ENCODE measurements at regions of chr7 and their contacts with region 1.

Region 1: GRCh38 chr7:75914730-75915585 is at the start of gene POR:
- H3K4me3 Mint-ChIP-seq: peak within 1 kb of the TSS; percentile 93
- H3K27ac Mint-ChIP-seq: peak within 1 kb of the TSS; percentile 92
- H3K4me1 Mint-ChIP-seq: peaks cover 55% of the 10 kb centered on the region
- H3K27me3 Mint-ChIP-seq: no peaks in the 10 kb centered on the region

Region 2: DNA sequence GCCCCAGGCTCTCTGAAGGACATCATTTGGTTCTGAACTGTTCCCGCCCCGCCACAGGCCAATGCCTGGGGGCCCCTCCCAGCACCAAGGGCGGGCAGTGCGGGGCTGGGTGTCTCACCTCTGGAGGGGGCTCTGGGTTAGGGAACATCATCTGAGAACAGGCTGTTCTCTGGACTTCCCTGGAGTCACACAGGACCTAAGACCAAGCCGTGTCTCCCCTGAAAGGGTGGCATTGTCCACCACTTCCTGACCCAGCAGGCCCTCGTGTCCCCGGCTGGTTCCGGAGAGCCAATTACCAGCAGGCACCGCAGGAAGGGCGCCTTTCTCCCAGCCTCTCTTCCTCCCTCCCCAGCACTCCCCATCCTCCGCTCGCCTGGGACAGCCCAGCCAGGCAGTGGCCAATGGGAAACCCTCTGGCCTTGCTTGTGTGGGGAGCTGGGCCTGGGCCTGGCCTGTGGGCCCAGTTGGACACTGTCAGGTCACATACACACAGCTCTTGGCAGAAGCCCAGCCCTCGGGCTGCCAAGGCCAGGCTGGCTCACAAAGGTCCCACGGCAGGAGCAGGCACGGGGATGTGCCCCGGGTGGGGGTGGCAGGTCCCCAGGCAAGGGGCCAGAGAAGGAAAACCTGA is 303.3 kb before region 1 on chr7:
- intact Hi-C with region 1: no loop called
- H3K4me3 Mint-ChIP-seq: peak overlapping the region; percentile 34
- H3K27ac Mint-ChIP-seq: peak overlapping the region; percentile 79
- H3K4me1 Mint-ChIP-seq: peaks cover 68% of the 10 kb centered on the region
- H3K27me3 Mint-ChIP-seq: no peaks in the 10 kb centered on the region

Region 3: DNA sequence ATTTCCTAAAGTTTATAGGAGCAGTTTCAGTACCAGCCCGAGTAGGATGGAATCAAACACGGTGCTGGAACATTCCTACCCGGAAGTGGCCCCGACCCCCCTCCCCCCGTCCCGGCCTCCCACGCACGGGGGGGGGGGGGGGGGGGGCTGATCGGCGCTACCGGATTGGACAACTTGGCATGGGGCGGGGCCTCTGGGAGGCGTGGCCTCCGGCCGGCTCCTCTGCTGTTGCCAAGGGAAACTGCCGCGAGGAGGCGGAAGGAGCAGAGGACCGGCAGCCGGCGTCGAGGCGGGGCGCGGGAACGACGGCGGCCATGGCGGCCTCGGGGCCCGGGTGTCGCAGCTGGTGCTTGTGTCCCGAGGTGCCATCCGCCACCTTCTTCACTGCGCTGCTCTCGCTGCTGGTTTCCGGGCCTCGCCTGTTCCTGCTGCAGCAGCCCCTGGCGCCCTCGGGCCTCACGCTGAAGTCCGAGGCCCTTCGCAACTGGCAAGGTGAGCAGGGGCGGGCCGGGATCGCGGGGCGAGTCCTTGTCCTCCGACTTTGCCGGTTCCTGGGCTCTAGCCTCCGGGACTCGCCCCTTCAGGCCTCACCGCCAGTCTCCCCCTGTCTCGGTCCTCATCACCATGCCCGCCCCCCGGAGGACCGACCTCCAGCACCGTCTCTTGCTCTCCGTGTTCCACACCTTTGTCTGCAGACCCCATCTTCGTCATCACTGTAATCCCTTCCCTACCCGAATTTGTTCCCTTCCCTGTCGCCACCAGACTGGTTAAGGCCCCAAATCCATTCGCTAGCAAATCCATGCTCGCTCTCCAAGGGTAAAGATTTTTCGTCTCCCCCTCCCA is 36.0 kb before region 1 on chr7 and contains the start of gene RHBDD2:
- intact Hi-C with region 1: loop called (anchors 5 kb)
- H3K4me3 Mint-ChIP-seq: peak within 1 kb of the TSS; percentile 95
- H3K27ac Mint-ChIP-seq: peak within 1 kb of the TSS; percentile 83
- H3K4me1 Mint-ChIP-seq: peaks cover 78% of the 10 kb centered on the region
- H3K27me3 Mint-ChIP-seq: no peaks in the 10 kb centered on the region

Region 4: GRCh38 chr7:75899091-75899490 is 15.9 kb before region 1 on chr7:
- intact Hi-C with region 1: no loop called
- H3K4me3 Mint-ChIP-seq: no peak overlapping the region
- H3K27ac Mint-ChIP-seq: no peak overlapping the region
- H3K4me1 Mint-ChIP-seq: peaks cover 3% of the 10 kb centered on the region
- H3K27me3 Mint-ChIP-seq: peaks cover 2% of the 10 kb centered on the region

Region 5: DNA sequence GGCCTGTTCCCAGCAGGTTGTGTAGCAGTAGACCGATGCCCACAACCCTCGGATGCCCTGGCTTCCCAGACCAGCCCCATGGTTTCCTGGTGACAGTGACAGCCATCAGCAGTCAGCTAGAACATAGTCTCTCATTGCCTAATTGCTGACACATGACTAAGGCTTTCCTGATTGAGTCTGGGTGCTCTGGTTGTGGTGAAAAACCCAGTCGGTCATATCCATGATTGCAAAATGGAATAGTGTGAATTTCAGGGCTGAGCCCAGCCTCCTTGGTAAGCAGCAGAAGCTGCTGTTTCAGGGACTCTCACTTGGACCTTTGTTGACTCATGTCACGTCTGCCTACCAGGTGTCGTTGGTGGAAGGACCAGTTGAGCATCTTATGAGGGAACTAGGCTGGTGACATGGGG is 36.6 kb after region 1 on chr7:
- intact Hi-C with region 1: loop called (anchors 5 kb)
- H3K4me3 Mint-ChIP-seq: no peak overlapping the region
- H3K27ac Mint-ChIP-seq: no peak overlapping the region
- H3K4me1 Mint-ChIP-seq: peaks cover 54% of the 10 kb centered on the region
- H3K27me3 Mint-ChIP-seq: no peaks in the 10 kb centered on the region